Prostate gland (tissue), 2 donors: ENCODE measurements at regions of chr14 and their contacts with region 1.

Region 1: DNA sequence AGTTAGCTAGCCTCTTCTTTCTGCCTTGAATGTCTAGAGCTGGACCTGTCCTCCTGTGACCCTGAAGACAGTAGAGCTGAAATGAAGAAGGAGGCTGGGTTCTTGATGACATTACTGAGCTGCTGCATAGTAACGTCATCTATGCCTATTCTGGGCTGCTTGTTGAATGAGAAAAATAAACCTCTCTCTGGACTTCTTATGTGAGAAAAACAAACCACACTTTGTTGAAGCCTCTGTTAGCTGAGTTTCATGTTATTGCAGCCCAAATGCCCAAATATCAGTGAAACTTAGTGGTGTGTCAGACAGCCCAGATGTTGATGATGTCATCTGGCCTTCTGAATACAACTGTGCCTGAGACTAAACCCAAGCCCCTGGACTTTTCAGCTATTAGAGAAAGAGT is 67.0 kb upstream of the MAX start:
- DNase-seq: no peak
- H3K4me3 ChIP-seq: no peak overlapping the region
- H3K27ac ChIP-seq: peak overlapping the region in 1 of 2 donors; percentile 5
- H3K4me1 ChIP-seq: no peaks in the 10 kb centered on the region
- H3K27me3 ChIP-seq: no peaks in the 10 kb centered on the region
- CTCF ChIP-seq: no peak
- POLR2A ChIP-seq: no peak

Region 2: DNA sequence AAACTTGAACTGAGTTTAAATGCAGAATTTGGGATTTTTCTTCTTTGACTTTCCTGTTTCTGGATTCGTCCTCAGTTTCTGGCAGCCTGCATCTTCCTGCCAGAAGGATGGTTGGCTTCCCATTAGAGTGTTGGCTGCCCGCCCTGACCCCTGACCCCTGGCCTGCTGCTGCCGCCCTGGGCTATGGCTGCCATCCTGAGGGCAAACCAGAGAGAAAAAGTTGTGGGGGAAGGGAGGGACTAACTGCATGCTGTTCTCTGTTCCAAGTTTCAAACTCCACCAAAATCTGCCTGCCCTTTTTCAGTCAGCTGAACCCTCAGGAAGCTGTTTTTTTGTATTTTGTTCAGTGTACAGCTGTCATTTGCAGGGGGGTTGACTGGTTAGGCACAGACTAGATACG is 134.3 kb before region 1 on chr14:
- intact Hi-C with region 1: no loop called
- DNase-seq: no peak
- H3K4me3 ChIP-seq: no peak overlapping the region
- H3K27ac ChIP-seq: no peak overlapping the region
- H3K4me1 ChIP-seq: no peaks in the 10 kb centered on the region
- H3K27me3 ChIP-seq: no peaks in the 10 kb centered on the region
- CTCF ChIP-seq: no peak
- POLR2A ChIP-seq: no peak

Region 3: DNA sequence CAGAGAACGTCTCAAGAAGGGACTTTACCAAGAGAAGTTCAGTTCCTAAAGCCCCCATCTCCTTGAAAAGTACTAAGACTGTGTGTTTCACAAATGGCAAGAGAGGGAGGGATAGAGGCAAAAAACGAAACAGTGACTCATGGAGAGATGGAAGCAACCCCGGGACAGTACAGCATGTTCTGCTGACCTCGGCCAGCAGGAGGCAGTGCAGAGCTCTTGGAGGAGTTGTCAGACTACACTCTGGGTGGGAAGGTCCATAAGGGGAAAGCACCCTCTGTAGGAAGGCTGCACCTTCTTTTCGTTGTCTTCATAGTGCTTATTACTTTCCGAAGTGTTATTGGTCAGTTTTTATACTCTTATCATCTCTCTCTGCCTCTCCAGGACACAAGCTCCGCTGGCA is 791.7 kb after region 1 on chr14:
- intact Hi-C with region 1: loop called (anchors 5 kb)
- DNase-seq: no peak
- H3K4me3 ChIP-seq: no peak overlapping the region
- H3K27ac ChIP-seq: no peak overlapping the region
- H3K4me1 ChIP-seq: peaks cover 5% of the 10 kb centered on the region
- H3K27me3 ChIP-seq: peaks cover 2% of the 10 kb centered on the region
- CTCF ChIP-seq: peak in 1 of 4 experiments; percentile 24
- POLR2A ChIP-seq: no peak